ENCODE measurements at regions of chr19 and their contacts with region 1.

Region 1: GRCh38 chr19:3224346-3225168 is at the start of gene CELF5:
- DNase-seq: peak; percentile 73
- H3K4me3 ChIP-seq: peak within 1 kb of the TSS; percentile 40
- H3K27ac ChIP-seq: no peak within 1 kb of the TSS
- H3K4me1 ChIP-seq: no peaks in the 10 kb centered on the region
- H3K27me3 ChIP-seq: no peaks in the 10 kb centered on the region
- CTCF ChIP-seq: no peak; the same call in 1 of the 2 replicates
- total RNA-seq, gene CELF5: 3.1 and 3.7 TPM in 2 replicates

Region 2: GRCh38 chr19:3649888-3650287 is 425.3 kb after region 1 on chr19:
- CTCF ChIA-PET with region 1: interaction called, 10 read pairs
- POLR2A ChIA-PET with region 1: no interaction called
- intact Hi-C with region 1: no loop called
- DNase-seq: no peak
- H3K4me3 ChIP-seq: no peak overlapping the region
- H3K27ac ChIP-seq: no peak overlapping the region
- H3K4me1 ChIP-seq: no peaks in the 10 kb centered on the region
- H3K27me3 ChIP-seq: no peaks in the 10 kb centered on the region
- CTCF ChIP-seq: no peak

Region 3: DNA sequence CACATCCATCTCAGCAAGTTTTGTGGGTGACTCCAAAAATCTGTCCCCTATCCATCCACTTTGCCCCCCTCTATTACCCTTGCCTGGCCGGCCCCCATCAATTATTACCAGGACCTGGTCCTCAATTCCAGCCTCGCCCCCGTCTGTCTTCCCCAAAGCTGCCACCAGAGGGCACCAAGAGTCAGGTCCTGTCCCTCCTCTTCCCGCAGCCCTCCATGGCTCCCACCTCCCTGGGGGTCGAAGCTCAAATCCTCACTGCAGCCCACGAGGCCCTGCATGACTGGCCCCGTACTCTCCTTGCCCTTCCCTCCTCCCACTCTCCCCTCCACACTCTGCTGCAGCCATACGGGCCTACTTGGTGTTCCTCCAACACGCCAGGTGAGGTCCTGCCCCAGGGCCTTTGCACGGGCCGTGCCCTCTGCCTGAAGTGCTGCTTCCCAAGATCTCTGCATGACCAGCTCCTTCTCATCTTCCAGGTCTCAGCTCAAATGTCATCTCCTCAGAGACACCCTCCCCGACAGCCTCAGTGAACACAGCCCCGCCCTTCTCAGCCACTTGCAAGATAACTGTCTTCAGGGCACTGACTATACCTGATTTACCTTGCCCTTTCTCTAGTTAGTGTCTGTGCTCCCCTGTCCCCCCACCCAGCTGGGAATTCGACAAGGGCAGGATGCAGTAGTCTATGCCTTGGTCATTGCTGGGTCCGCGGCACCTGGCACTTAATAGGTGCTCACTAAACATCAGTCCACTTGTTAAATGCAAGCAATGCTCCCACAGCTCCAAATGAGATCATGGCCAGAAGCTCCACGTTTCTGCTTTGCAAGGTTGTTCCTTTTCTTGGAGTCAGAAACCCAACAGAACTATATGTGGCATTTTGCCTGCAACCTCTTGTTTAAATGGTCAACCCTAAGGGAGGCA is 1351.7 kb after region 1 on chr19:
- CTCF ChIA-PET with region 1: interaction called, 10 read pairs
- POLR2A ChIA-PET with region 1: no interaction called
- intact Hi-C with region 1: no loop called
- DNase-seq: peak; percentile 59
- H3K4me3 ChIP-seq: no peak overlapping the region
- H3K27ac ChIP-seq: no peak overlapping the region
- H3K4me1 ChIP-seq: peaks cover 24% of the 10 kb centered on the region
- H3K27me3 ChIP-seq: peaks cover 9% of the 10 kb centered on the region
- CTCF ChIP-seq: peak; percentile 84